Heart right ventricle (tissue), 16 donors: ENCODE measurements at regions of chr5 and their contacts with region 1.

Region 1: GRCh38 chr5:113378959-113379541 is 55.7 kb downstream of the TSSK1B start:
- DNase-seq: peak in 1 of 2 donors; percentile 57
- ATAC-seq: peak in 3 of 8 donors; percentile 46 to 71 (median 52)
- H3K4me3 ChIP-seq: no peak overlapping the region
- H3K27ac ChIP-seq: no peak overlapping the region
- H3K4me1 ChIP-seq: peaks cover 0 to 30% (median 0%) of the 10 kb centered on the region in 9 donors
- H3K27me3 ChIP-seq: peaks cover 0 to 29% (median 0%) of the 10 kb centered on the region in 7 donors
- CTCF ChIP-seq: peak; percentile 45 to 84 (median 76)

Region 2: GRCh38 chr5:113507601-113508000 is 128.6 kb after region 1 on chr5:
- intact Hi-C with region 1: loop called in 8 of 10 experiments (anchors 2 to 10 kb)
- DNase-seq: no peak
- ATAC-seq: no peak
- H3K4me3 ChIP-seq: no peak overlapping the region
- H3K27ac ChIP-seq: no peak overlapping the region
- H3K4me1 ChIP-seq: no peaks in the 10 kb centered on the region
- H3K27me3 ChIP-seq: peaks cover 0 to 46% (median 0%) of the 10 kb centered on the region in 7 donors
- CTCF ChIP-seq: no peak